Activated naive CD4-positive, alpha-beta T cell treated with anti-CD3 and anti-CD28 coated beads, Interleukin-2, amount 10 ng/mL, durations not matched to agents 7 days and 5 days (primary cell): ENCODE measurements at regions of chr10 and their contacts with region 1.

Region 1: GRCh38 chr10:43204943-43205671 is 61.8 kb downstream of the RASGEF1A start:
- DNase-seq: peak; percentile 74
- H3K4me3 Mint-ChIP-seq: no peak overlapping the region
- H3K27ac Mint-ChIP-seq: no peak overlapping the region
- H3K4me1 Mint-ChIP-seq: peaks cover 12% of the 10 kb centered on the region
- H3K27me3 Mint-ChIP-seq: peaks cover 10% of the 10 kb centered on the region

Region 2: DNA sequence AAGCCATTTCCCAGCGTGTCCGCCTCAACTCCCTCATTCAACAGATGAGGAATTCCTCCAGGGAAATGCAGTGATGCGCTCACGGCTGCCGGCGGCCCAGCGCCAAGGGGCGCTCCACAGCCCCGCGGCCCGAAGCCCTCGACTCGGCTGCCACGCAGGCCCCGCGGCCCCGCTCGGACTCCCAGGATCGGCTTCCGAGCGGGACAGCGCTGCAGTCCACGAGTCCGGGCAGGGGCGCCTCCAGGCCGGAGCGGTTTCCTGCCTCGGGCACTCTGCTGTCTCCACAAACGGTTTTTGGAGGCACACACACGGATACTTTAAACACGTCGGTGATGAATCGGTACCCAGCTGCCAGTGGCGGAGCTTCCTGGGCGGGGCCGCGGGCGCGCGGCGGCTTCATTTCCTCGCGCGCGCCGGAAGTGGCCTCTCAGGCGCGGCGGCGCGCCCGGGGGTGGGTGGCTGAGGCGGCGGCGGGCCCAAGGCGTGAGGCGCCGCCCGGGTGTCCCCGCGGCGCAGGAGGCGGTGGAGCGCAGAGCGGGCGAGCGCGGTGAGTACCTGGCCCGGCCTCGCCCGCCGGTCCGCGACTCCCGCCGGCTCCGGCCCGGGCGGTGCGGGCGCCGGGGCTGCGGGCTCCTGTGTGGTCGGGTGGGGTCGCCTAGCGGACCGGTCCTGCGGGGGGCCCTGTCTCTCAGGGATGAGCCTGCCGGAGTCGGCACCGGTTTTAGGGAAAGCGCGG is 66.9 kb before region 1 on chr10 and contains the start of gene CSGALNACT2:
- CTCF ChIA-PET with region 1: interaction called, 10 read pairs
- DNase-seq: peak; percentile 90
- H3K4me3 Mint-ChIP-seq: peak within 1 kb of the TSS; percentile 91
- H3K27ac Mint-ChIP-seq: peak within 1 kb of the TSS; percentile 99
- H3K4me1 Mint-ChIP-seq: peaks cover 63% of the 10 kb centered on the region
- H3K27me3 Mint-ChIP-seq: no peaks in the 10 kb centered on the region

Region 3: GRCh38 chr10:43190775-43191174 is 14.3 kb before region 1 on chr10:
- CTCF ChIA-PET with region 1: interaction called, 16 read pairs
- DNase-seq: no peak
- H3K4me3 Mint-ChIP-seq: no peak overlapping the region
- H3K27ac Mint-ChIP-seq: no peak overlapping the region
- H3K4me1 Mint-ChIP-seq: no peaks in the 10 kb centered on the region
- H3K27me3 Mint-ChIP-seq: peaks cover 5% of the 10 kb centered on the region

Region 4: GRCh38 chr10:43221419-43222209 is 16.5 kb after region 1 on chr10:
- CTCF ChIA-PET with region 1: interaction called, 10 read pairs
- DNase-seq: peak; percentile 21
- H3K4me3 Mint-ChIP-seq: no peak overlapping the region
- H3K27ac Mint-ChIP-seq: no peak overlapping the region
- H3K4me1 Mint-ChIP-seq: no peaks in the 10 kb centered on the region
- H3K27me3 Mint-ChIP-seq: peaks cover 63% of the 10 kb centered on the region

Region 5: DNA sequence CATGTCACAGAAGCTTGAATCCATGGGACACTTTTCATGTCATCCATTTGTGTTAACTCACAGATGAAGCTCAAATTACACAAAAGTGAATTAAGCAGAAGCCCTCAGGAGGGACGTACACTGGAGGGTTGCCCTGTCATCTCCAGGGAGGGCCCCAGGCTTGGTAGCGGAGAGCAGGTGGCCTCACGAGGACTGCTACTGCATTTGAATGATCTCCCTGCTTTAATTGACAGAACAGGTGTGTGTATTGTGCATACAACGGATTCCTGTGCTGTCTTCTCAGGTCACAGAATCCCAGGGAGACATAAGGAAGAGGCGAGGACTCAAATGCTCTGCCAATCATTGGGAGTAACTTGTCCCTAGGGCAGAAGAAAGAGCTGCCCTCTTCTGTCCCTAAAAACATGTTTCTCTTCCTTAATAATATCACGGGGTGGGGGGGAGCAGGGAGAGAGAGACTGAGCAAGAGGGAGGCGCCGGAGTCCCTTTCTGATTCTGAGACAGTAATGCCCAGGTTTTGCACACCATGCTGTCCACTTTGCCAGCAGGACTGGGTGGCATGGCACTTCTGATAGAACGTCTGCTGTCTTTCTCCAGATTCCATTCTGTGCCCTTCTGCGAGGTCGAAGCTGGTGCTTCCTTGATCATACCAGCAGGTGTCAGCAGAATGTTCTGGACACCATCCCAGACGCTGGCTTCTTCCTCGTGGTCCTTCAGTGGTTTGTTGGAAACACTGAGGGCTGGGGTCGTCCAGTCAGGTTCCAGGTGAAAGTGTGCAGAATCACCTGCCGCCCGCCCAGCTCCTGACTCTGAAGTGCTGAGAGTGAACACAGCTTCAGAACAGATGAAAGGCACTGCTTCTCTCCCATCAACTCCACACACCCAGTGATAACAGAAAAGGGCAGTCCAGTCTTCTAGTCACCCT is 87.9 kb after region 1 on chr10:
- CTCF ChIA-PET with region 1: interaction called, 27 read pairs
- DNase-seq: peak; percentile 65
- H3K4me3 Mint-ChIP-seq: no peak overlapping the region
- H3K27ac Mint-ChIP-seq: peak overlapping the region; percentile 88
- H3K4me1 Mint-ChIP-seq: peaks cover 81% of the 10 kb centered on the region
- H3K27me3 Mint-ChIP-seq: peaks cover 21% of the 10 kb centered on the region

Region 6: GRCh38 chr10:43304687-43305340 is 99.7 kb after region 1 on chr10:
- CTCF ChIA-PET with region 1: no interaction called
- DNase-seq: peak; percentile 71
- H3K4me3 Mint-ChIP-seq: peak overlapping the region; percentile 58
- H3K27ac Mint-ChIP-seq: peak overlapping the region; percentile 78
- H3K4me1 Mint-ChIP-seq: peaks cover 63% of the 10 kb centered on the region
- H3K27me3 Mint-ChIP-seq: peaks cover 26% of the 10 kb centered on the region

Region 7: DNA sequence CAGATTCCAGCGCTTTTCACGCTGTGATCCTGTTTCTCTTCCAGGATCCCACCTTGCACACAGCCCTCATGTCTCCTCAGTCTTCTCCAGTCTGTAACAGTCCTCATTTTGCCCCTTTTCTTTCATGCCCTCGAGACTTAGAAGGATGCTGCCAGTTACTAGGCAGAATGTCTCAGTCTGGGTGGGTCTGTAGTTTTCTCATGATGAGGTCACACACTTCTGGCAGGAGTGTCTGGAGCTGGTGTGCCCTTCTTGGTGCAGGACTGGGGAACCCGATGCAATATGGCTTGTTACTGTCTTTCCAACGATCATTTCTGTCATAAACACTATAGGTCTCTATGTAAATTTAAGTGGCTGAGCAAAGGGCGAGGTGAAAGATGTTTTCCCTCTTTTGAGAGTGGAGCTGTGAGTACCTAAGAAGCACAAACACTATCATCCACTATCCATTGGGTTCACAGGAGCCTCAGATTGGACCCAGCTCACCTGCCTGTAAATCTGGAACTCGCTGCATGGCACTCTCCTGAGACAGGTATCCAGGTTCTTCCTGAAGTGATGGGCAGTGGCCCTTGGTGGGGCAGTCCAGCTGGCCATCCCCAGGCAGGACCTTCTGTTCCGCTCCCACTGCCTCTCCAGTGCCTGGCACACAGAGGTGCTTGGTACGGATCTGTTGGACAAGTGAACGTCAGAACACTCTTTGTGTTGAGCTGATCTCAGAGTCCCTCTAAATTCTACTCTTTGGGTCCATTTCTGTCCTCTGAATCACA is 507.9 kb after region 1 on chr10:
- CTCF ChIA-PET with region 1: no interaction called
- DNase-seq: no peak
- H3K4me3 Mint-ChIP-seq: no peak overlapping the region
- H3K27ac Mint-ChIP-seq: no peak overlapping the region
- H3K4me1 Mint-ChIP-seq: no peaks in the 10 kb centered on the region
- H3K27me3 Mint-ChIP-seq: peaks cover 11% of the 10 kb centered on the region